Gastrocnemius medialis (tissue), 4 donors: ENCODE measurements at regions of chr14 and their contacts with region 1.

Region 1: GRCh38 chr14:54572316-54572715 is 5.4 kb downstream of the SAMD4A start:
- DNase-seq: no peak
- ATAC-seq: no peak
- H3K4me3 ChIP-seq: no peak overlapping the region
- H3K27ac ChIP-seq: peak overlapping the region in 1 of 4 donors; percentile 99
- H3K4me1 ChIP-seq: peaks cover 67 to 78% of the 10 kb centered on the region in 2 donors
- H3K27me3 ChIP-seq: no peaks in the 10 kb centered on the region
- CTCF ChIP-seq: peak; percentile 24 to 65 (median 38)
- POLR2A ChIP-seq: no peak

Region 2: GRCh38 chr14:54537650-54538049 is 34.7 kb before region 1 on chr14:
- in situ Hi-C with region 1: no loop called
- intact Hi-C with region 1: no loop called
- DNase-seq: no peak
- ATAC-seq: no peak
- H3K4me3 ChIP-seq: no peak overlapping the region
- H3K27ac ChIP-seq: no peak overlapping the region
- H3K4me1 ChIP-seq: no peaks in the 10 kb centered on the region
- H3K27me3 ChIP-seq: no peaks in the 10 kb centered on the region
- CTCF ChIP-seq: no peak
- POLR2A ChIP-seq: no peak

Region 3: GRCh38 chr14:54683882-54684794 is 111.8 kb after region 1 on chr14:
- in situ Hi-C with region 1: loop called in 1 of 4 experiments (anchors 10 kb)
- intact Hi-C with region 1: no loop called
- DNase-seq: peak in 1 of 2 donors; percentile 50
- ATAC-seq: no peak
- H3K4me3 ChIP-seq: no peak overlapping the region
- H3K27ac ChIP-seq: peak overlapping the region; percentile 86 to 99 (median 92)
- H3K4me1 ChIP-seq: peaks cover 56 to 64% of the 10 kb centered on the region in 2 donors
- H3K27me3 ChIP-seq: no peaks in the 10 kb centered on the region
- CTCF ChIP-seq: no peak
- POLR2A ChIP-seq: no peak

Region 4: DNA sequence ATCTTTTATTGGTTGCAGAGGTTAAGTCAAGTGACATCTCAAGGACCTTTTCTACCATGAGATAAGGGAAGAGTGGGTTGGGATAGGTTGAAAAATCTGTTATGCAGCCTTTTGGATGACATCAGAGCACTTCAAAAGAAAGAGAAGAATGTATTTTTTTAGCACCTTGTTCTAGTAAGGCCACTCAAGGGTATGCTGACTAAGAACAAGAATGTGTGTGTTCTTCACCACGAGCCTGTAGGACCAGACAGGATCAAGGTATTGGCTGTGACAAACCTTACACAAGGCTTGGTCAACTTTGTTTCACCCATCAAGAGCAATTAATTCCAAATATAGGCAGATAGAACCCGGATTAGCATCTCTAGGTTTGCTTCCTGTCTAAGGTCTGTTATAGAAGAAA is 137.1 kb after region 1 on chr14:
- in situ Hi-C with region 1: no loop called
- intact Hi-C with region 1: no loop called
- DNase-seq: no peak
- ATAC-seq: no peak
- H3K4me3 ChIP-seq: no peak overlapping the region
- H3K27ac ChIP-seq: peak overlapping the region; percentile 86 to 98 (median 89)
- H3K4me1 ChIP-seq: peaks cover 81 to 92% of the 10 kb centered on the region in 2 donors
- H3K27me3 ChIP-seq: no peaks in the 10 kb centered on the region
- CTCF ChIP-seq: no peak
- POLR2A ChIP-seq: no peak

Region 5: GRCh38 chr14:54955143-54955542 is 382.8 kb after region 1 on chr14:
- in situ Hi-C with region 1: no loop called
- intact Hi-C with region 1: no loop called
- DNase-seq: no peak
- ATAC-seq: no peak
- H3K4me3 ChIP-seq: no peak overlapping the region
- H3K27ac ChIP-seq: no peak overlapping the region
- H3K4me1 ChIP-seq: no peaks in the 10 kb centered on the region
- H3K27me3 ChIP-seq: no peaks in the 10 kb centered on the region
- CTCF ChIP-seq: no peak
- POLR2A ChIP-seq: no peak